Head of caudate nucleus (tissue), 42 donors: ENCODE measurements at regions of chr1 and their contacts with region 1.

Region 1: DNA sequence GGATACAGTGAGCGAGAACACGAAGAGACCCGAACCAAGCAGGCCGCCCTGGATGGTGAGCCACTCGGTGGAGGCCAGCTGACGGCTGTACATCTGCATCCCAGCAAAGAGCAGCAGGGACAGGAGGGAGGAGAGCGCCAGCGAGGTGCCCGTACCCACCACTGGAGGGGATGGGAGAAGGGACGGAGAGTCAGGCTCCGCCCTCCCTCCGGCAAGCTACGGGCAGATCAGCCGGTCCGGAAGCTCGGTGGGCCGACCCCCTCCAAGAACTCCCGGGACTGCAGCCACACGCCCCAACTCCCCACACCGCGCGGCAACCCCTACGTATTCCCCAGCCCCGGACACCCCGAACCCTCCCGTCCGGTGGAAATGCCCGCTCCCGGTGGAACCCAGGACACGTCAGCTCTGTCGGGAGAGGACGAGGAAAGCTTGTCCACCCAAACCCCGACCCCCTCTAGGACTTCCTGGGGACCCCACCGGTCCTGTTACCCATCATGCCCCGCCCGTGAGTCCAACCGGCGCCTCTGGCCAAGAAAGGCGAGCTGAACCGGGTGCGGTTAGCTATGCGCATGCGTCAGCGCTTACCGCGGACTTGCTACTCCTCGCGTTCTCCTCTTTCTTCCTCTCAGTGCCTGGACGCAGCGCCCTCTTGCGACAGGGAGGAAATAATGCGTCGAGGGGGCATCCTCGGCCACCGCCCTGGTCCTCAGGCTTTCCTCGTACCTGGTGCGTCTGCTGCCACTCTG is at the start of gene KRTCAP2:
- DNase-seq: peak; percentile 89 to 98 (median 96)

Region 2: GRCh38 chr1:154695985-154696384 is 476.9 kb before region 1 on chr1:
- intact Hi-C with region 1: no loop called
- DNase-seq: peak in 1 of 42 donors; percentile 14

Region 3: GRCh38 chr1:155070721-155071569 is 102.0 kb before region 1 on chr1:
- intact Hi-C with region 1: no loop called
- DNase-seq: peak in 41 of 42 donors; percentile 44 to 87 (median 75)

Region 4: DNA sequence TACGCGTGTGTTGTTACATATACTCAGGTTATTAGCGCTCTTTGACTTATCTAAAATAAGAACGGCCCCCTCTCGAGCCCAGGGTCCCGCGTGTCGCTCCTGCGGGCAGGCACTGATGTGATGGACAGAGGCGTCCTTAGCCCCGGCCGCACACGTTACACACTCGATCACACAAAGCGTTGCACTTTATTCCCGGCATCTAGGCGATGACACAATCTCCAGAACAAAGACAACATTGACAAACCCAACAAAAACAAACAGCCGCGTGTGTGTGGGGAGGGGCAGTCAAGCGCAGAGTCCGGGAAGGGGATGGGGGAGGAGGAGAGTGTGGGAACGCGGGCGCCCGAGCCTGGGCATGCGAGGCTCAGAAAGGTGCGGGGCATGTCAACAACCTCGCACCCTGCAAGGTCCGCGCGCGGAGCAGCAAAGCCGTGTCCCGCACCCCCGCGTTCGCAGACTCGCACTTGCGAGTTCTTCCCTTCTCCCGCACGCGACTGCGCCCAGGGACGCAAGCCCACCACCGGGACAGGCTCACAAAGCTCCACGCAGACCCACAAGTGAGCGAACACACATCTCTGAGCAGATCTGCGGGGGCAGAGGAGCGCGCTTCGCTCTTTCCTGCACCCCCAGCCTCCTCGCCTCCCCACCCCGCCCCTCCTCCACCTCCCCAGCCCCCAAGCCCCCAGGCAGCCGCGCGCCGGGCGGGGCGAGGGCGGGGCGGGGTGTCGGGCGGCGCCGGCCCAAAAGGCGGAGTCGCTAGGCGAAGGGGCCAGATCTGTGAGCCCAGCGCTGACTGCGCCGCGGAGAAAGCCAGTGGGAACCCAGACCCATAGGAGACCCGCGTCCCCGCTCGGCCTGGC is 45.6 kb before region 1 on chr1 and contains the start of gene EFNA1:
- intact Hi-C with region 1: loop called (anchors 2 kb)
- DNase-seq: peak; percentile 79 to 96 (median 90)

Region 5: GRCh38 chr1:155244368-155245162 is 71.7 kb after region 1 on chr1:
- intact Hi-C with region 1: no loop called
- DNase-seq: peak; percentile 92 to 99 (median 98)

Region 6: DNA sequence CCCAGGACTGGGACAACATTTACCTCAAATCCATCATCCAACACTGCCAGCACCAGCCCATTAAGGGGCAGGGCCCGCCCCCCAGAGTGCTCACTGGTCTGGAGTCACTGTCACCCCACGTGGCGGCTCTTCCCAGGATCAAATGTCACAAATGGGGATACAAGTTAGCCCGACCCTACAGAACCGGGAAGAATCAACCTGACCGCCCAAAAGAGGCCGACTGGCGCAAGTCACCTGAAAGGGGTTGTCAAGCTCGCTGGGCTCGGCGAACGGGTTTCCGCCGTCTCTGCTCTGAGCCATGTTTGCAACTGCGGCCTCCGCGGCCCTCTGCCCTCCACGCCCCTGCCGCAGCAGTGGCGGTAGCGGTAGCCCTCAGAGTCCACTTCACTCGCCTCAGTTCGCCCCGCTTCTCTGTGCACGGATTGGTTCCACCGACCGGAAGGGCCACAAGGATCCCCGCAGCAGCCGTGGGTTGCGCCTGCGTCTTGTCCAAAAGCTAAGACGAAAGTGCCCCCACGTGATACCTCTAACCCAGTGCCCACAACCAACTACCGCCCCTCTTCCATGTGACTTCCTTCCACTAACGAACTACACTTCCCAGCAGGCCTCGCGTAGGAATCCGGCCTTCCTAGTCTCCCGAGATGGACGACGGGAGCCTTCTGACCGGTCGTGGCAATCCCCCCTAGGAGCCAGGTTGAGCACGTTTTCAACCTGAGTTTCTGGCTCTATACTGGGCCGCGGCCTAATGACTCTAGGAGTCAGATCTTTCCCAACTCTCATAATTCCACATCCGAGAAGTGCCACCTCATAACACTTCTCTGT is 89.2 kb after region 1 on chr1 and contains the start of gene SCAMP3:
- intact Hi-C with region 1: no loop called
- DNase-seq: peak; percentile 91 to 99 (median 98)